ENCODE measurements at regions of chr10 and their contacts with region 1.

Region 1: DNA sequence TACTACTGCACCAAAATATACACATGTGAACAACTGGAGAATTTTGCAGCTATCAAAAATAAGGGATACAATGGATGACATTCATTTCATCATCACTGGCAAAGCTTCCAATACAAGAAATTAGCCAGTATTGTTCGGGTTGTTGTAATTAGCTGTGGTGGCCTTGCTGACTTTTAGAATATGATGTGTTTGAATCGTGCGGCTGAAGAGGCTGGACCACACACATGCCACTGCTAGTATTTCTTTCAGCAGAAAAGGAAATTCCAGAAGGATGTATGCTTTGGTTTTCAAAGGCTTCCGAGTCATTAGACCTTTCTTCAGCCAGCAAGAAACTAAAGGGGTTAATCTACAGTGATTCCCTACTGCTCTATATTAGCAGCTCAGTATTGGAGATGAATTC is 16.6 kb downstream of the RPP38 start:
- DNase-seq: no peak
- H3K4me3 ChIP-seq: no peak overlapping the region
- H3K27me3 ChIP-seq: no peaks in the 10 kb centered on the region
- CTCF ChIP-seq: no peak

Region 2: DNA sequence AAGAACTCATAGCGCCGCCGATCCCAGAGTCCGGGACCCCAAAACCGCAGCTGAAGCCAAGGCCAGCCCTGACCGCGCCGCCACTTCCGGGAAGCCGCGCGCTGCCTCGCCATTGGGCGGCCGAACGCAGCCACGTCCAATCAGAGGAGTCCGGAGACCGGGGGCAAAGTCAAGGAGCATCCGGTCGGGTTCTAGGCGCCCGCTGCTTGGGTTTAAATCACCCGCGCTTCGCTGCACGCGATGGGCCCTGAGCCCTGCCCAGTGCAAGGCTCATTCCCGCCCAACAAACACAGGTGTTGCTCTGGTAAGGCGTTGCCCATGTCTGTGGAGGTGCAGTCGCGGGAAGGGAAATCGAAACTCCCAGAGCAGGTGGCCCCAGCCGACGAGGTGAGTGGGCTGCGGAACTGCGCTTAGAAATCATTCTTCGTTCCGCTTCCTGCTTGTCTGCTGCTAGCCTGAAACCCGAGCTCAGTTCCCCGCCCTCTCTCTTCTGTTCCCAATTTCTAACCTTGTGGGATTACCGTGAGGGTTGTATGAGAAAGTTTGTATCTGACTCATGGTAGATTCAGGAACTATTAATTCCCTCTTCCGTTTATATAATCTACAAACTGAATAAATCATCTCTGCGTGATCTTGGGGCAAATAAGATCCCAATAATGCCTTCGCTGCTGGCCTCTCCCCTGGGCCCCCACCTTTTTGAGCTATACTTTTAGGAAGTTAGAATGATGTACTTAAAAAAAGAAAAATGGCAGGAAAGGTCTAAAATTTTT is 159.6 kb before region 1 on chr10 and contains the start of gene DCLRE1C:
- CTCF ChIA-PET with region 1: no interaction called
- POLR2A ChIA-PET with region 1: interaction called, 12 read pairs
- DNase-seq: peak; percentile 64
- H3K4me3 ChIP-seq: peak within 1 kb of the TSS; percentile 74
- H3K27me3 ChIP-seq: no peaks in the 10 kb centered on the region
- CTCF ChIP-seq: no peak
- polyA plus RNA-seq, gene DCLRE1C: 4.1 and 6.0 TPM in 2 replicates

Region 3: DNA sequence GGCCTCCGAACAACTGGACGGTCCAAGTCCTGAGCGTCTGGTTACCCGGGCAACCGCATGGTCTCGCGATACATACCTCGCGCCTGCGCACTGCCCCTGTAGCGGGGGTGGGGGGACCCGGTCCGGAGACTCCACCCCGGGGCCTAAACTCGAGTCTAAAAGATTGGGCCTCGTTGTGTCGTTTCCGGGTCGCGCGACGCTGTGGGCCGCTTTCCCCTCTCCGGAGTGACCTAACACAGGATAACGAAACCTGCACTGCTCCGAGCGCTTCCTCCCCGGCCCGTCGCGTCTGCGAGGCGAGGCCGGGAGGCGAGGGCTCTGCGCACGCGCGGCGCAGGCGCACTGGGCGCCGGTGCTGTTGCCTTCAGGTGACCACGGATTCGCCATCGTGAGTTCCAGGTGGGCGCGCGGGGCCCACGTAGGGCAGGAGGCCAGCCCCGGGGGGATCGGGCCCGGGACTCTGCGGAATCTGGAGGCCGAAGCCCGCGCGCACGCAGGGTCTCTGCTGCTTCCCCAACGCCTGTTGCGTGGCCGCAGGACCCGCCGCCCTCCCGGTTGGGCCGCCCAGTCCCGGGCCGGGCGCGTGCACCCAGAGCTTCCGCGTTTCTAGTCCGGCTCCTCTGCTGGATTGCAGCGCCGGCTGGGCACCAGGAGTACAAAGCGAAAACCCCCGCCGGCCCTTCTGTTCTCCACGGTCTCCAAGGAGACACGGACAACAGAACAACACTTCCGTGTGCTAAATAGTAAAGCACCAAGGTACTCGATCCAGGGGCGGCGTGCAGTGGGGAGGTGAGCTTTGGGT is 16.6 kb before region 1 on chr10 and contains the start of gene RPP38:
- CTCF ChIA-PET with region 1: no interaction called
- POLR2A ChIA-PET with region 1: no interaction called
- DNase-seq: peak; percentile 57
- H3K4me3 ChIP-seq: peak within 1 kb of the TSS; percentile 65
- H3K27me3 ChIP-seq: no peaks in the 10 kb centered on the region; the same call in 1 of the 2 replicates
- CTCF ChIP-seq: 0 out of 2 replicates have a peak, but pooled peaks have one; percentile 3
- polyA plus RNA-seq, gene RPP38: 15.9 and 17.2 TPM in 2 replicates

Measured in BJ (cell line).